CD4-positive, alpha-beta memory T cell (primary cell): ENCODE measurements at regions of chr9 and their contacts with region 1.

Region 1: GRCh38 chr9:31677415-31677814 is 707.0 kb upstream of the ACO1 start:
- DNase-seq: no peak
- H3K4me3 ChIP-seq: no peak overlapping the region
- H3K4me3 Mint-ChIP-seq: no peak overlapping the region
- H3K27ac ChIP-seq: no peak overlapping the region
- H3K27ac Mint-ChIP-seq: no peak overlapping the region
- H3K4me1 ChIP-seq: no peaks in the 10 kb centered on the region
- H3K4me1 Mint-ChIP-seq: peaks cover 0 to 4% (median 1%) of the 10 kb centered on the region in 4 donors
- H3K27me3 ChIP-seq: no peaks in the 10 kb centered on the region
- H3K27me3 Mint-ChIP-seq: no peaks in the 10 kb centered on the region

Region 2: GRCh38 chr9:31629292-31629691 is 48.1 kb before region 1 on chr9:
- CTCF ChIA-PET with region 1: no interaction called
- POLR2A ChIA-PET with region 1: no interaction called
- intact Hi-C with region 1: no loop called
- DNase-seq: no peak
- H3K4me3 ChIP-seq: no peak overlapping the region
- H3K4me3 Mint-ChIP-seq: no peak overlapping the region
- H3K27ac ChIP-seq: no peak overlapping the region
- H3K27ac Mint-ChIP-seq: peak overlapping the region in 1 of 7 donors; percentile 34
- H3K4me1 ChIP-seq: no peaks in the 10 kb centered on the region
- H3K4me1 Mint-ChIP-seq: peaks cover 8 to 14% (median 9%) of the 10 kb centered on the region in 4 donors
- H3K27me3 ChIP-seq: no peaks in the 10 kb centered on the region
- H3K27me3 Mint-ChIP-seq: no peaks in the 10 kb centered on the region

Region 3: DNA sequence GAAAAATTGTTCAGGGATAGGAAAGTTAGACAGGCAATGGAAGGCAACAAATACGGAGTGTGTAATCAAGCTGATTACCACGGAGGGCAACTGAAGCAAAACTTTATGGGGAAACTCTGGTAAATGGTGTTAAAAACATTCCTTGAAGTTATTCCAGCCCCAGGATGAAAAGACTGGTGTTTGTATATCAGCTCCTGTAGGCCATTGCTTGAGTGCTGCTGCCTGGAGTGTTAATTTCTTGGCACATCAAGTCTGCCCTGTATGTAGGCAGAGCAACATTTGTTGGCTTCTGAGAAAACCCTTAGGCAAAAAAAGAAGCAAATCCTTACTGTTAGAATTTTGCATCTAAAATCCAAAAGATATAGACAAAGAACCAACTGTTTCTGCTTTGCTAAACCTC is 20.5 kb after region 1 on chr9:
- CTCF ChIA-PET with region 1: no interaction called
- POLR2A ChIA-PET with region 1: no interaction called
- intact Hi-C with region 1: loop called (anchors 2 kb)
- DNase-seq: no peak
- H3K4me3 ChIP-seq: no peak overlapping the region
- H3K4me3 Mint-ChIP-seq: no peak overlapping the region
- H3K27ac ChIP-seq: no peak overlapping the region
- H3K27ac Mint-ChIP-seq: no peak overlapping the region
- H3K4me1 ChIP-seq: peaks cover 5% of the 10 kb centered on the region
- H3K4me1 Mint-ChIP-seq: peaks cover 9 to 16% (median 14%) of the 10 kb centered on the region in 4 donors
- H3K27me3 ChIP-seq: no peaks in the 10 kb centered on the region
- H3K27me3 Mint-ChIP-seq: no peaks in the 10 kb centered on the region